Endothelial cell of umbilical vein (primary cell): ENCODE measurements at regions of chr1 and their contacts with region 1.

Region 1: DNA sequence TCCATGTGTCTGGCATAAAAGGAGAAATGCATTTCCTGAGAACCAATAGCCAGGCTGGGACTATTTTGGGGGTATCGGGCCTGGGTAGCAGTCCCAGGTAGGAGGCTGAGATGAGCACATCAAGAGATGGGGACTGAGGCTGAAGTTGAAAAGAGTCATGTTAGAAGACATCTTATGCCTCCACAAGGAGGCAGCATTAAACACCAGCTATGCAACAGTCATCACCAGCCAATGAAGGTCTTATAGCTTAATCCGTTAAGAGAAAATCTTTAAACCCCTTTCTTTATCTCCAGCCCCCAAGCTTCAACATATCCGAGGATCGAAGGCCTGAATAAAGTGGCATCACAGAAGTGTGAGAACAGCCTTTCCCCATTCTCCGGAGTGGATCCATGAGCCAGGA is 640.7 kb upstream of the PTBP2 start:
- DNase-seq: no peak
- H3K4me3 ChIP-seq: no peak overlapping the region
- H3K27ac ChIP-seq: no peak overlapping the region
- H3K4me1 ChIP-seq: no peaks in the 10 kb centered on the region
- H3K27me3 ChIP-seq: no peaks in the 10 kb centered on the region
- CTCF ChIP-seq: no peak
- POLR2A ChIP-seq: no peak

Region 2: GRCh38 chr1:95916616-95917015 is 164.3 kb before region 1 on chr1:
- CTCF ChIA-PET with region 1: interaction called, 3 read pairs
- POLR2A ChIA-PET with region 1: no interaction called
- dilution Hi-C with region 1: no loop called
- intact Hi-C with region 1: loop called (anchors 5 kb)
- DNase-seq: peak; percentile 46
- H3K4me3 ChIP-seq: no peak overlapping the region
- H3K27ac ChIP-seq: no peak overlapping the region
- H3K4me1 ChIP-seq: no peaks in the 10 kb centered on the region
- H3K27me3 ChIP-seq: no peaks in the 10 kb centered on the region
- CTCF ChIP-seq: peak; percentile 25 to 51
- POLR2A ChIP-seq: no peak